Panc1 (cell line): ENCODE measurements at regions of chr12 and their contacts with region 1.

Region 1: DNA sequence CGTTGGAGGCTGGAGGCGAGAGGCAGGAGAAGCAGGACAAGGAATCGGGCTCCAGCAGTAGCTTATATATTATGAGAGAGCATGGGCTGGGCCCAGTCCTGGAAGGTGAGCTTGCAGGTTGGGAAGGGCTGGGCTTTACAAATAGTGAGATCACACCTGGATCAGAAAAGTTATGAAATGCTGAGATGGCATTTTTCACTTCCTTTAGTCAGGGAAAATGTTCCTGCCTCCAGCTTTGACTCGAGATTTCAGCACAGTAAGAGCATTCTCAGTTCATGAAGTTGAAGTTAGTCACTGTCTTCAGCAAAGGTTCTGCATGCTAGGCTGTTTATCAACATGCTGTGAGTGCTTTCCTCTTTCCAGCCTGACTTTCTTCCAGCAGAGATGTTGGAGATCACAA is at the start of gene KRT6C:
- DNase-seq: no peak
- ATAC-seq: no peak
- H3K4me3 ChIP-seq: no peak within 1 kb of the TSS
- H3K27ac ChIP-seq: no peak within 1 kb of the TSS
- H3K4me1 ChIP-seq: no peaks in the 10 kb centered on the region
- H3K27me3 ChIP-seq: no peaks in the 10 kb centered on the region; the same call in 1 of the 2 replicates
- CTCF ChIP-seq: no peak
- total RNA-seq, gene KRT6C: not detected

Region 2: GRCh38 chr12:51779876-51780275 is 693.9 kb before region 1 on chr12:
- CTCF ChIA-PET with region 1: no interaction called
- POLR2A ChIA-PET with region 1: interaction called, 13 read pairs
- in situ Hi-C with region 1: no loop called
- intact Hi-C with region 1: no loop called
- DNase-seq: no peak
- ATAC-seq: no peak
- H3K4me3 ChIP-seq: no peak overlapping the region
- H3K27ac ChIP-seq: no peak overlapping the region
- H3K4me1 ChIP-seq: no peaks in the 10 kb centered on the region
- H3K27me3 ChIP-seq: no peaks in the 10 kb centered on the region
- CTCF ChIP-seq: no peak

Region 3: DNA sequence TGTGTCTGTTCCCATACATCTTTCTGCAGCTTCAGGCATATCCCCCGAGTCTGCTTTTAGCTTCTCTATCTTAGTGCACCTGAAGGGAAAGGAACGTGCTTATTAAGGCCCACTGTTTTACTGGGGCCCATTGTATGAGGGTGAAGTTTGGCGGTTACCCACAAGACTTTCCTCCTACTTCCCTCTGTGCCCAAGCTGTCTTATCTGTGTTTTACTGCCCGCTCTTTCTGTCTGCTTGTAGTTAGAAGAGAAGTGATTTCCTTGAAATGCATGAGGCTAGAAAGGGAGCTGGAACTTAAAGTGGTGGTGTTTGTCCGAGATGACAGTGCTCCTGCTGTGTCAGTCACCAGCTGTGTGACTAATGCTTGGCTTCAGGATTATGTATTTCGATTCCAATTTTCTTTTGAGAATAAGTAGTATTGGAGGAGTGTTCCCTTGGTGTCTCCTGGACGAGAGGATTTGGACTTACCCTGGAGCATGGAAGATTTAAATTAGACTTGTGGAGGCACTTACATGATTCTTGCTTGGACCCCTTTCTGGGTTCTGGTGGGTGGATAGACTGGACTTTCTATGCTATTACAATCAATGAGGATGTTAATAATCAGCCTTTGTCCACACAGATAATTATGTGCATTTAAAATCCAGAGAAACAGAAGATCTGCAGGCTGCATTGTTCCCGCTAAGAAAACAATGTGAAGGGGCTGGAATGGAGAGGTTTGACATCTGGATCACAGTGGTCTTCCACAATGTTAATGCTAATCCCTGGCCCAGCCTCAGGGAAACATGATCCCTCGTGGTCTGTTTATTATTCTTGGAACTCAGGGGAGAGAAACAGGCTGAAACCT is 213.2 kb before region 1 on chr12:
- CTCF ChIA-PET with region 1: no interaction called
- POLR2A ChIA-PET with region 1: no interaction called
- in situ Hi-C with region 1: no loop called
- intact Hi-C with region 1: no loop called
- DNase-seq: no peak
- ATAC-seq: no peak
- H3K4me3 ChIP-seq: no peak overlapping the region
- H3K27ac ChIP-seq: peak overlapping the region; percentile 48
- H3K4me1 ChIP-seq: no peaks in the 10 kb centered on the region
- H3K27me3 ChIP-seq: no peaks in the 10 kb centered on the region
- CTCF ChIP-seq: no peak

Region 4: GRCh38 chr12:52454411-52455216 is 19.2 kb before region 1 on chr12:
- CTCF ChIA-PET with region 1: no interaction called
- POLR2A ChIA-PET with region 1: interaction called, 3 read pairs
- in situ Hi-C with region 1: no loop called
- intact Hi-C with region 1: loop called (anchors 2 kb)
- DNase-seq: peak; percentile 70
- ATAC-seq: peak; percentile 92
- H3K4me3 ChIP-seq: no peak overlapping the region
- H3K27ac ChIP-seq: no peak overlapping the region; the same call in 1 of the 2 replicates
- H3K4me1 ChIP-seq: peaks cover 8% of the 10 kb centered on the region; the same call in 1 of the 2 replicates
- H3K27me3 ChIP-seq: peaks cover 3% of the 10 kb centered on the region; the same call in 1 of the 2 replicates
- CTCF ChIP-seq: no peak